ENCODE measurements at regions of chr2 and their contacts with region 1.

Region 1: GRCh38 chr2:216632952-216633615 is at the start of gene IGFBP2:
- DNase-seq: peak; percentile 83
- H3K4me3 Mint-ChIP-seq: peak within 1 kb of the TSS; percentile 95
- H3K27ac Mint-ChIP-seq: peak within 1 kb of the TSS; percentile 78
- H3K4me1 Mint-ChIP-seq: peaks cover 29% of the 10 kb centered on the region
- H3K27me3 Mint-ChIP-seq: peaks cover 74% of the 10 kb centered on the region
- total RNA-seq, gene IGFBP2: 33.5 and 42.4 TPM in 2 replicates

Region 2: GRCh38 chr2:216335252-216335651 is 297.8 kb before region 1 on chr2:
- intact Hi-C with region 1: no loop called
- DNase-seq: no peak
- H3K4me3 Mint-ChIP-seq: no peak overlapping the region
- H3K27ac Mint-ChIP-seq: no peak overlapping the region
- H3K4me1 Mint-ChIP-seq: no peaks in the 10 kb centered on the region
- H3K27me3 Mint-ChIP-seq: peaks cover 26% of the 10 kb centered on the region

Region 3: DNA sequence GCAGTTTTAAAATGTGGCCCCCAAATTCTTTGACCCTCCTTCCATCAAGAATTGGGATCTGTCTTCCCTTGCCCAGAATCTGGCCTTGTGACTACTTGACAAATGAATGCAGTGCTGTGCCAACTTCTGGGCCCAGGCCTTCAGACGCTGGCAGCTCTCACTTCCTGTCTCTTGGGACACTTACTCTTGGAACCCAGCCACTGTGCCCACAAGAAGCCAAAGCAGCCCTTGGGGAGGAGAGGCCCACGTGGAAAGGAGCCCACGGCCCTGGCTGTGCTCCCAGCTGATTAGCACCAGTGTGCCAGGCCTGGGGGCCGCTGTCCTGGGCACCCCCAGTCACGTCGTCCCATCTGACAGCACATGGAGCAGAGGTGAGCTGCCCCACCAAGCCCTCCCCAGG is 77.8 kb before region 1 on chr2:
- intact Hi-C with region 1: no loop called
- DNase-seq: no peak
- H3K4me3 Mint-ChIP-seq: no peak overlapping the region
- H3K27ac Mint-ChIP-seq: no peak overlapping the region
- H3K4me1 Mint-ChIP-seq: peaks cover 2% of the 10 kb centered on the region
- H3K27me3 Mint-ChIP-seq: peaks cover 2% of the 10 kb centered on the region

Region 4: GRCh38 chr2:216606551-216607276 is 26.4 kb before region 1 on chr2:
- intact Hi-C with region 1: loop called (anchors 1 kb)
- DNase-seq: peak; percentile 88
- H3K4me3 Mint-ChIP-seq: peak overlapping the region; percentile 92
- H3K27ac Mint-ChIP-seq: peak overlapping the region; percentile 98
- H3K4me1 Mint-ChIP-seq: peaks cover 40% of the 10 kb centered on the region
- H3K27me3 Mint-ChIP-seq: no peaks in the 10 kb centered on the region

Measured in activated CD4-positive, alpha-beta T cell treated with anti-CD3 and anti-CD28 coated beads, Interleukin-2, amount 10 ng/mL, durations not matched to agents 24 days and 14 days (primary cell).